ENCODE measurements at regions of chr19 and their contacts with region 1.

Region 1: DNA sequence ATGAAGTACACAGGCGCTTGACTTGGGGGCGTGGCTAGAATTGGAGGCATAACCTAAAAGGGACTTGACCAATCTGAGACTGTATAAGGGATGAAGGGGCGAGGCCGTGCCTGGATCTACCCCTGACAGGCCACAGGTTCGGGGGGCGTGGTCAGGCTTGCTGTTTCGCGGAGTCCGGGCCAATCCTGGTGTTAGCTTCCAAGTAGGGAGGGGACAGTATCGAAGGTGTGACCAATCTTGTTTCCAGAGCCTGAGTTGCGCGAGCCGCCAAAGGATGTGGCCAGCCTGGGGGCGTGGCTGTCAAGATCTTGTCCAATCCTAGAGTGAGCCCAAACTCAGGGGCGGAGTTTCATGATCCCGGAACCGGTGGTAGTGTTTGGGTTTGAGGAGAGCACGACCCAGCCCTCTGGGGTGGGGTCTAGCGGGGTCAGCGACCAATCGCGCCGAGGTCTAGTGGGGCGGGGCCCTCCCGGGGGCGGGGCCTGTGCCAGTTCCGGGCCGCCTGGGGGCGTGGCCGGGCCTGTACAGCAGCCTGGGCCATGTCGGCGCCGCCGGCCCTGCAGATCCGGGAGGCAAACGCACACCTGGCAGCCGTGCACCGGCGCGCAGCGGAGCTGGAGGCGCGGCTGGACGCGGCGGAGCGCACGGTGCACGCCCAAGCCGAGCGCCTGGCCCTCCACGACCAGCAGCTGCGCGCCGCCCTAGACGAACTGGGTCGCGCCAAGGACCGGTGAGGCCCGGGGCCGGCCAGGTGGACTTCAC is at the start of gene VMAC:
- DNase-seq: peak; percentile 100
- H3K4me3 Mint-ChIP-seq: peak within 1 kb of the TSS; percentile 97
- H3K27ac Mint-ChIP-seq: peak within 1 kb of the TSS; percentile 99
- H3K4me1 Mint-ChIP-seq: peaks cover 35% of the 10 kb centered on the region
- H3K27me3 Mint-ChIP-seq: no peaks in the 10 kb centered on the region
- total RNA-seq, gene VMAC: 7.6 to 7.9 TPM

Region 2: DNA sequence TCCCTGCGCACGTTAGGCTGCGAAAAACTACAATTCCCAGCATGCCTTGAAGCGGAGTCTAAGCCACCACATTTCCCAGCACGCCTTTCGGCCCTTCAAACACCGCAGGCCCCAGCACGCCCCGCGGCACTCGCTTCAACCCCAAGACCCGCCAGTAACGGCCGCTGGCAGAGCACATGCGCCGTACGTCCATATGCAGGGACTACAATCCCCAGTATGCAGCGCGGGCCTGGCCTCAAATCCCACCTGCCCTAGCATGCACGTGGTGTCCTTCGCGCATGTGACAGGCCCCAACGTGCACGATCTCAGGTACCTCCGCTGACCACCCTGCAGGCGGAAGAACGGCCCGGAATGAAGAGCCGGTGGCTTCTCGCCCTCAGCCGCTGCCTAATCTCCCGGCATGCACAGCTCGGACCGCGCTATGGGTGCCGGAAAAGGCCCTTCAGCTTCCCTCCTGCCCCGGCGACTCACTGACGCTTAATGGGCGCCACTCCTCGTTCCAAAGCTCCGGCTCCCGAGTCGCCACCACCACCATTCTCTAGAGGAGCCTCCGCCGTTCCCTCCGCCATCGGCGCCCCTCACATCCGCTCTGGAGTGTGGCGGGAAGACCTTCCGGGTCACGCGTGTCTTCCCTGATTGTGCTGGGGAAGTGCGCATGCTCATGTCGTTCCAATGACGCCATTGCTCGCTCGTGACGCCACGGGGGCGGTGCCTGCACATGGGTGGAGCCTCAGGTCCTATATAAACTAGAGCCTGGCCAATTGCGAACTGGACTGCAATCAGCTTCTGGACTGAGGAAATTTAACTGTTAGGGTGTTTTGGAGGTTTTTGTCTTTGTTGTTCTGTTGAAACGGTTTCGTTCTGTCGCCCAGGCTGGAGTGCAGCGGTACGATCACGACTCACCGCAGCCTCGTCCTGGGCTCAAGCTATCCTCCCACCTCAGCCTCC is 113.7 kb before region 1 on chr19 and contains the start of gene DUS3L:
- CTCF ChIA-PET with region 1: interaction called, 5 read pairs
- POLR2A ChIA-PET with region 1: interaction called, 15 read pairs
- DNase-seq: peak; percentile 97
- H3K4me3 Mint-ChIP-seq: peak within 1 kb of the TSS; percentile 99
- H3K27ac Mint-ChIP-seq: peak within 1 kb of the TSS; percentile 100
- H3K4me1 Mint-ChIP-seq: peaks cover 16% of the 10 kb centered on the region
- H3K27me3 Mint-ChIP-seq: no peaks in the 10 kb centered on the region
- total RNA-seq, gene DUS3L: 38.3 to 42.1 TPM

Region 3: GRCh38 chr19:5827891-5828660 is 76.5 kb before region 1 on chr19:
- CTCF ChIA-PET with region 1: interaction called, 18 read pairs
- POLR2A ChIA-PET with region 1: interaction called, 61 read pairs
- DNase-seq: peak; percentile 97
- H3K4me3 Mint-ChIP-seq: peak overlapping the region; percentile 94
- H3K27ac Mint-ChIP-seq: peak overlapping the region; percentile 97
- H3K4me1 Mint-ChIP-seq: peaks cover 14% of the 10 kb centered on the region
- H3K27me3 Mint-ChIP-seq: no peaks in the 10 kb centered on the region

Region 4: GRCh38 chr19:5880604-5881078 is 23.9 kb before region 1 on chr19:
- CTCF ChIA-PET with region 1: no interaction called
- POLR2A ChIA-PET with region 1: no interaction called
- DNase-seq: no peak
- H3K4me3 Mint-ChIP-seq: no peak overlapping the region
- H3K27ac Mint-ChIP-seq: no peak overlapping the region
- H3K4me1 Mint-ChIP-seq: no peaks in the 10 kb centered on the region
- H3K27me3 Mint-ChIP-seq: peaks cover 3% of the 10 kb centered on the region

Region 5: GRCh38 chr19:5953680-5954213 is 49.2 kb after region 1 on chr19:
- CTCF ChIA-PET with region 1: no interaction called
- POLR2A ChIA-PET with region 1: interaction called, 13 read pairs
- DNase-seq: peak; percentile 47
- H3K4me3 Mint-ChIP-seq: peak overlapping the region; percentile 62
- H3K27ac Mint-ChIP-seq: peak overlapping the region; percentile 92
- H3K4me1 Mint-ChIP-seq: peaks cover 85% of the 10 kb centered on the region
- H3K27me3 Mint-ChIP-seq: no peaks in the 10 kb centered on the region

Region 6: DNA sequence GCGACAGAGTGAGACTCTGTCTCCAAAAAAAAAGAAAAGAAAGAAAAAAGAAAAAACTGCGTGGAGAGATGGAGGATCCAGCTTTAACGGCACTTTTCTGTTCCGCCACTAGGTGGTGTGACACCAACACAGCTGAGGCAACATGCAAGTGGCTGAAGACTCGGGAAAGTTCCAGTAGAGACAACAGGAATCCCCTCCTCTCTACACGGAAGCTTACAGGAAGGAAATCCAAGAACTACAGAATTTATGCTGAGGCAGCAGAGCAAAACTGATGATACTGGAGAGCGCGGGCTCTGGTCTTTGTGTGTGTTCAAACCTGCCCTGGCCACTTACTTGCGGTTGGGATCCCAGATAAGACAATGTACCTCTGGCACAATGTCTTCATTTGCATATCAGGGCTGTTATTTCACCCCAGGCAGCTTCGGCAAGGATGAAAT is 63.5 kb after region 1 on chr19:
- CTCF ChIA-PET with region 1: interaction called, 14 read pairs
- POLR2A ChIA-PET with region 1: interaction called, 5 read pairs
- DNase-seq: peak; percentile 66
- H3K4me3 Mint-ChIP-seq: no peak overlapping the region
- H3K27ac Mint-ChIP-seq: peak overlapping the region; percentile 76
- H3K4me1 Mint-ChIP-seq: peaks cover 69% of the 10 kb centered on the region
- H3K27me3 Mint-ChIP-seq: no peaks in the 10 kb centered on the region